IMR-90 (cell line): ENCODE measurements at regions of chr18 and their contacts with region 1.

Region 1: GRCh38 chr18:80157708-80158343 is 48.8 kb downstream of the ADNP2 start:
- DNase-seq: peak; percentile 74
- ATAC-seq: peak; percentile 84
- H3K4me3 ChIP-seq: no peak overlapping the region
- H3K27ac ChIP-seq: no peak overlapping the region
- H3K4me1 ChIP-seq: no peaks in the 10 kb centered on the region
- H3K27me3 ChIP-seq: no peaks in the 10 kb centered on the region
- CTCF ChIP-seq: peak; percentile 92
- POLR2A ChIP-seq: no peak
- RAD21 ChIP-seq: peak; percentile 94

Region 2: DNA sequence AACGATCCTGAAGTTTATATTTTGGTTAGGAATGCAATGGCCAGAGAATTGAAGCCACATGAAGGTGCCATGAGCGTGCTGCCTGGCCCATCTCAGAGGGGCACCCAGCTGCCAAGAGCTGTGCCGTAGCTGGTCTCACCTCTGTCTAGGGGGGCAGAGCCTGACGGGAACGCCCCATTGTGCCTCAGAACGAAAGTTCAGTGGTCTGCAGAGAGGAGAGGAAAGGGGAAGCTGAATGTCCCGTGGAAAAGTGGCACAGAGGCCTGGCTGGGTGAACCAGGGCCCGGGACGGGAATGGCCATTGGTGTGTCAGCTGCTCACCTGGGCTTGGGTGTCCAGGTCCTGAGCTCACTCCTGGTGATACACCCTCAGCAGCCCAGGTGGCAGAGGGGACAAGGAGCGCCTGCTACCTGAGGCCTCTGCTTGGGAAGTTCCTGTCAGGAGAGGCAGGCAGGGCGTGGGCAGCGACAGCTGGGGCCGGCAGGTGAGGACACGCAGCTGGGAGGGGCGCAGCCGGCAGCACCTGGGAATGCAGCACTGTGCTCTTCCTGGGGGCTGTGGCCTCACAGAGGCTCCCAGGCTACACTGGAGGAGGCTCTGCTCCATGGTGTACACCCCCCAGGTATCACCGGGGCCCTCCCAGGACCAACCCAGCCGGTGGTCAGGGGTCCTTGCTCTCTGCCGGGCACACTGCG is 22.2 kb after region 1 on chr18:
- CTCF ChIA-PET with region 1: interaction called, 4 read pairs
- POLR2A ChIA-PET with region 1: no interaction called
- dilution Hi-C with region 1: no loop called
- in situ Hi-C with region 1: no loop called
- intact Hi-C with region 1: loop called (anchors 2 kb)
- DNase-seq: no peak
- ATAC-seq: no peak
- H3K4me3 ChIP-seq: no peak overlapping the region
- H3K27ac ChIP-seq: no peak overlapping the region
- H3K4me1 ChIP-seq: peaks cover 2% of the 10 kb centered on the region; the same call in 1 of the 2 replicates
- H3K27me3 ChIP-seq: no peaks in the 10 kb centered on the region
- CTCF ChIP-seq: no peak
- POLR2A ChIP-seq: no peak
- RAD21 ChIP-seq: no peak

Region 3: DNA sequence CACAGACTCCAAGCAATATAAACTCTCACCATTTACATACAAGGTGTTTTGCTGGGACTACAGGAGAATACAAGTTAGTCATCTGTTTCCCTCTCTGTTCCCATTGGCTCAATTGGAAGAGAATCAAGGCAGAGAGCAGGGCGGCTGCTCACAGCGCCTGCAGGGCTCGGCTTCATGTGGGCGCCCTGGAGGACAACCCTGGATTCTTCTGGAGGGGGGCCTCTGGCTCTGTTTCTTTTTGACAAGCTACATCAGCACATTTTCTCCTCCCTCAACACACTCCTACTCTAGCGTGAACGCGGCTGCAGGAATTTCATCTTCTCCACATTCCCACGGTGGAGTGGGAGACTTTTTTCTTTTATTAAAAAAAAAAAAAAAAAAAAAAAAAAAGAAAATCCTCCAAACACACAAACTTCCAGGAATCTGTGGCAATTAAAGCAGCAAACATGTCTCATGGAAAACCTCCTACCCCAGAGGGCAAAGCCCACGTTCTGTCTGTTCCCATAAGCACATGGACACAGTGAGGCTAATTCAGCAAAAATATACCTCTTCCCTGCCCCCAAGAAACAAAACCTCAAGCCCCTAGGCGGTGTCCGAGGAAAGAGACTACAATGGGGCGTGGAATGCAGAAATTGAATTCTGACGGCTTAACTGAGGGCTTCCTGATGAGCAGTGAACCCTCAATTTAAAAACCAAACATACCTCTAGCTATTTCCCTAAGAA is 38.9 kb after region 1 on chr18:
- CTCF ChIA-PET with region 1: no interaction called
- POLR2A ChIA-PET with region 1: no interaction called
- dilution Hi-C with region 1: no loop called
- in situ Hi-C with region 1: no loop called
- intact Hi-C with region 1: no loop called
- DNase-seq: peak; percentile 42
- ATAC-seq: peak; percentile 38
- H3K4me3 ChIP-seq: no peak overlapping the region
- H3K27ac ChIP-seq: no peak overlapping the region
- H3K4me1 ChIP-seq: peaks cover 8% of the 10 kb centered on the region
- H3K27me3 ChIP-seq: no peaks in the 10 kb centered on the region
- CTCF ChIP-seq: no peak
- POLR2A ChIP-seq: no peak
- RAD21 ChIP-seq: no peak

Region 4: DNA sequence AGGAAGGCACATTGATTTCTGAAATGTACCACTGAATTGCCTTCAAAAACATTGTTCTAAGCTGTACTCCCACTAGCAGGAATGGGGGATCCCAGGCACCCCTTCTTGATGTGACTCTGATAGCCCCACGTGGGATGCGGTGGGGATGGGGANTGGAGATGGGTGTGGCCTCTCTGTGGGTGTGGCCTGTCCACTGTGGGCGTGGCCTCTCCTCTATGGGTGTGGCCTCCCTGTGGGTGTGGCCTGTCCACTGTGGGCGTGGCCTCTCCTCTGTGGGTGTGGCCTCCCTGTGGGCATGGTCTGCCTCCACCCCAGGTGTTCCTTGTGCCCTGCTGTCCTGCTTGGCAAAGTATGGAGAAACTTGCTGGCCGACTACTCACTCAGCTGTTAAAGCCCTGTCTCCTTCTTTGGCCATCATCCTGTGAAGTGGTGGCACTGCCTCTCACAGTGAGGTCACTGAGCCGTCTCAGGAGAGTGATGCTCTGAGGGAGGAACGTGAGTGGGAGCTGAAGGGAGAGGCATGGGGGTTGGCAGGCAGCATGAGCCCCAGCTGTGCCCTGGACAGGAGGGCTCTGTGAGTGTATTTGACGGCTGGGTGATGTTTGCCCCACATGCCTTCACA is 96.2 kb after region 1 on chr18:
- CTCF ChIA-PET with region 1: interaction called, 3 read pairs
- POLR2A ChIA-PET with region 1: no interaction called
- dilution Hi-C with region 1: no loop called
- in situ Hi-C with region 1: no loop called
- intact Hi-C with region 1: loop called (anchors 1 kb)
- DNase-seq: no peak
- ATAC-seq: peak; percentile 28; the same call in 1 of the 2 replicates
- H3K4me3 ChIP-seq: no peak overlapping the region
- H3K27ac ChIP-seq: no peak overlapping the region
- H3K4me1 ChIP-seq: peaks cover 1% of the 10 kb centered on the region; the same call in 1 of the 2 replicates
- H3K27me3 ChIP-seq: no peaks in the 10 kb centered on the region; the same call in 1 of the 2 replicates
- CTCF ChIP-seq: no peak
- POLR2A ChIP-seq: no peak
- RAD21 ChIP-seq: no peak